H1 (cell line): ENCODE measurements at regions of chr16 and their contacts with region 1.

Region 1: GRCh38 chr16:4790871-4791270 is 2.7 kb upstream of the SEPTIN12 start:
- DNase-seq: no peak
- H3K4me3 ChIP-seq: no peak overlapping the region
- H3K27ac ChIP-seq: no peak overlapping the region
- H3K4me1 ChIP-seq: peaks cover 0 to 13% (median 4%) of the 10 kb centered on the region in 4 experiments; a peak in 5 of 7 replicates
- H3K27me3 ChIP-seq: no peaks in the 10 kb centered on the region; a peak in 1 of 7 replicates
- CTCF ChIP-seq: no peak
- EP300 ChIP-seq: no peak
- POLR2A ChIP-seq: no peak
- RAD21 ChIP-seq: no peak

Region 2: DNA sequence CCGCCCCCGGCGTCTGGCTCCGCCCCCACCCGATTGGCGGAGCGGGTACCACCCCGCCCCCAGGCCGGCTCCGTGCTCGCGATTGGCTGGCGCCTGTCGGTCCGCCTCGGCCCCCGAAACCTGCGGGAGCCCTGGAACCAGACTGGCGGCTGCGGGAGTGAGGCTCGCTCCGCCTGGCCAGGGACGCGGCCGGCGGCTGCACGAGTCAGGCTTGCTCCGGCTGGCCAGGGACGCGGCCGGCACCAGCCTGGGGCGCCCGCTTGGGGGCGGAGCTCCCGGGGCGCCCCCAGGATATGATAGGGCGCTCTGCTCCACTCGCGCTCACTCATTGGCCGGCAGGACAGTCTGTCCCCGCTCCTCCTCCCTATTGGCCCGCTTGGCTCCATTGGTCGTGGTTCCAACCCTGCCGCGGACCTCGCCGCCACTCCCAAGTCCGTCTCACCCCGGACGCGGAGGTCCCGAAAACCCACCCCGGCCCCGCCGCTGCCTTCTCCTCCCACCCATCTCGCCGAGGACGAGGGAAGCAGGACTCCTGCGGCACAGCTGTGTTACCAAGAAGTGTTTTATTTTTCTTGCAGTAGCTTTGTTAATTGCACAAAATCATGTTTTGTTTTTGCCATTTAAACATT is 11.9 kb after region 1 on chr16:
- CTCF ChIA-PET with region 1: interaction called, 3 read pairs
- POLR2A ChIA-PET with region 1: interaction called, 21 read pairs
- DNase-seq: peak; percentile 66 to 97
- H3K4me3 ChIP-seq: peak overlapping the region; percentile 63 to 82 (median 78)
- H3K27ac ChIP-seq: peak overlapping the region; percentile 70
- H3K4me1 ChIP-seq: peaks cover 0 to 14% (median 8%) of the 10 kb centered on the region in 4 experiments; a peak in 4 of 7 replicates
- H3K27me3 ChIP-seq: no peaks in the 10 kb centered on the region
- CTCF ChIP-seq: no peak
- EP300 ChIP-seq: no peak
- POLR2A ChIP-seq: peak in 1 of 2 experiments; percentile 61; a peak in 1 of 3 replicates
- RAD21 ChIP-seq: no peak